Heart left ventricle (tissue), 16 donors: ENCODE measurements at regions of chr11 and their contacts with region 1.

Region 1: GRCh38 chr11:124875943-124876817 is 10.9 kb downstream of the ROBO3 start:
- DNase-seq: peak; percentile 89 to 91 (median 89)
- ATAC-seq: peak; percentile 79 to 92 (median 90)
- H3K4me3 ChIP-seq: peak overlapping the region; percentile 1 to 82 (median 60)
- H3K27ac ChIP-seq: peak overlapping the region; percentile 70 to 98 (median 88)
- H3K4me1 ChIP-seq: peaks cover 0 to 31% (median 20%) of the 10 kb centered on the region in 12 donors
- H3K27me3 ChIP-seq: peaks cover 0 to 51% (median 14%) of the 10 kb centered on the region in 9 donors
- CTCF ChIP-seq: peak; percentile 47 to 92 (median 76)
- POLR2A ChIP-seq: no peak

Region 2: GRCh38 chr11:124898711-124899110 is 22.5 kb after region 1 on chr11:
- intact Hi-C with region 1: loop called in 2 of 10 experiments (anchors 2 kb)
- DNase-seq: peak in 4 of 5 donors; percentile 63 to 78 (median 68)
- ATAC-seq: peak; percentile 55 to 69 (median 62)
- H3K4me3 ChIP-seq: peak overlapping the region in 4 of 12 donors; percentile 52 to 60 (median 56)
- H3K27ac ChIP-seq: peak overlapping the region; percentile 74 to 93 (median 85)
- H3K4me1 ChIP-seq: peaks cover 0 to 79% (median 38%) of the 10 kb centered on the region in 12 donors
- H3K27me3 ChIP-seq: no peaks in the 10 kb centered on the region
- CTCF ChIP-seq: no peak
- POLR2A ChIP-seq: no peak